Activated CD4-positive, alpha-beta memory T cell treated with anti-CD3 and anti-CD28 coated beads, Interleukin-2, amount 10 ng/mL, durations not matched to agents 7 days and 5 days (primary cell): ENCODE measurements at regions of chr12 and their contacts with region 1.

Region 1: DNA sequence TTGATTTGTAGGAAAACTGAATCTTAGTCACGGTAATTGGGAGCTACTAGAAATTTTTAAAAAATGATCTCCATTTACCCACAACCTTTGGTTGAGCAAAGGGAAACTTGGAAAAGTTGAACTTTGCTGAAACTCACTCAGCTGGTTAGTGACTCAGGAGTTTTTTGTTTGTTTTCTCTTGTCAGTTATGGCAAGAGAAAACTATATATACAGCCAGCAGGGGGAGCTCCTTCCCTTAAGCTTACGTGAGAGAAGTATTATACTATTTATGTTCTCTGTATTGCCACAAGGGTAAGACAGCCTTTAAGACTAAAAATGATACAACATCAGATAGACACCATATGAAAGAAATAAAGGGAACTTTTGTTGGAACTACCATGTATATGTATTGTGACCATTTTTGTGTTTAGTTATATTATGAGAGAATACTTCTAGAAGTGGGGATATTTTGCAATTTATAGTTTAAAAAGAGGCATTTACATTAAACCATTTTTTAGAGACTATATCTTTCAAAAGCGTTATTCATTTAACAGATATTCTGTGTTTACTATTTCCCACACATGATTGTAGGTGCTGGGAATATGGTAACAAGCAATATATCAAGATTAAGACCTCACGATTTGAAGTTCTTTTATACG is 28.1 kb upstream of the TBC1D30 start:
- DNase-seq: peak; percentile 55
- H3K4me3 Mint-ChIP-seq: no peak overlapping the region
- H3K27ac Mint-ChIP-seq: no peak overlapping the region
- H3K4me1 Mint-ChIP-seq: no peaks in the 10 kb centered on the region
- H3K27me3 Mint-ChIP-seq: peaks cover 33% of the 10 kb centered on the region

Region 2: DNA sequence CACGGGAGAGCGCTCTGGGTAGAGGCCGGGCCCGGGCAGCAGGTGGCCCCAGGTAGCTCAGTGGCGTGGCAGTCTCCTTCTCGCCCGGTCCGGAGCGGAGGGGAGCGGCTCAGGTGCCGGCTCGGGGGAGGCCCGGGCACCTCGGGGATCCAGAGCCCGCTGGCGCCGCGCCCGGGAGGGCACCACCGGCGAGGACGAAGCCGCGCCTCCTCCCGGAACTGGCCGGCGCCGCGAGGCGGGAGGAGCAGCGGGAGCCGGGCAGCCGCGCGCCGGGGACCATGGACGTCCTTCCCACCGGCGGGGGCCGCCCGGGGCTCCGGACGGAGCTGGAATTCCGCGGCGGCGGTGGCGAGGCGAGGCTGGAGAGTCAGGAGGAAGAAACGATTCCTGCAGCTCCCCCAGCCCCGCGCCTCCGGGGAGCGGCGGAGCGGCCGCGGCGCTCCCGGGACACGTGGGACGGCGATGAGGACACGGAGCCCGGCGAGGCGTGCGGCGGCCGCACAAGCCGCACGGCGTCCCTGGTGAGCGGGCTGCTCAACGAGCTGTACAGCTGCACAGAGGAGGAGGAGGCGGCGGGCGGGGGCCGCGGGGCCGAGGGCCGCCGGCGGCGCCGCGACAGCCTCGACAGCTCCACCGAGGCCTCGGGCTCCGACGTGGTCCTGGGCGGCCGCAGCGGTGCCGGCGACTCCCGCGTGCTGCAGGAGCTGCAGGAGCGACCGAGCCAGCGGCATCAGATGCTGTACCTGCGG is 15.6 kb before region 1 on chr12:
- CTCF ChIA-PET with region 1: interaction called, 16 read pairs
- POLR2A ChIA-PET with region 1: interaction called, 4 read pairs
- DNase-seq: no peak
- H3K4me3 Mint-ChIP-seq: peak overlapping the region; percentile 46
- H3K27ac Mint-ChIP-seq: no peak overlapping the region
- H3K4me1 Mint-ChIP-seq: peaks cover 17% of the 10 kb centered on the region
- H3K27me3 Mint-ChIP-seq: peaks cover 77% of the 10 kb centered on the region

Region 3: GRCh38 chr12:64785838-64786237 is 10.5 kb before region 1 on chr12:
- CTCF ChIA-PET with region 1: interaction called, 16 read pairs
- POLR2A ChIA-PET with region 1: interaction called, 4 read pairs
- DNase-seq: no peak
- H3K4me3 Mint-ChIP-seq: no peak overlapping the region
- H3K27ac Mint-ChIP-seq: no peak overlapping the region
- H3K4me1 Mint-ChIP-seq: peaks cover 12% of the 10 kb centered on the region
- H3K27me3 Mint-ChIP-seq: peaks cover 43% of the 10 kb centered on the region

Region 4: DNA sequence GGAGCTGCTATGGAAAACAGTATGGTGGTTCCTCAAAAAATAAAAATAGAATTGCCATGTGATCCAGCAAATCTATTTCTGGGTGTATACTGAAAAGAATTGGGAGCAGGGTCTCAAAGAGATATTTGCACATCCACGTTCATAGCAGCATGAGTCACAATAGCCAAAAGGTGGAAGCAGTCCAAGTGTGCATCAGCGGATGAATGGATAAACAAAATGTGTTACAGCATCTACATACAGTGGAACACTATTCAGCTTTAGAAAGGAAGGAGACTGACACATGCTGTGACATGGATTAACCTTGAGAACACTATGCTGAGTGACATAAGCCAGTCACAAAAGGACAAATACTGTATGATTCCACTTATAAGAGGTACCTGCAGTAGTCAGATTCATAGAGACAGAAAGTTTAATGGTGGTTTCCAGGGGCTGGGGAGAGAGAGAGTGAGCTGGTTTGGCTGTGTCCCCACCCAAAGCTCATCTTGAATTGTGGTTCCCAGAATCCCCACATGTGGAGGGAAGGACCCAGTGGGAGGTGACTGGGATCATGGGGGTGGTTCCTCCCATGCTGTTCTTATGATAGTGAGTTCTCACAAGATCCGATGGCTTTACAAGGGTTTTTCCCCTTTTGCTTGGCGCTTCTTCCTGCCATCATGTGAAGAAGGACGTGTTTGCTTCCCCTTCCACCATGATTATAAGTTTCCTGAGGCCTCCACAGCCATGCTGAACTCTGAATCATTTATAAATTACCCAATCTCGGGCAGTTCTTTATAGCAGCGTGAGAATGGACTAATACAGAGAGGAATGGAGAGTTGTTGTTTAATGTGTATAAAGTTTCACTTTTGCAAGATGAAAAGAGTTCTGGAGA is 10.5 kb after region 1 on chr12:
- CTCF ChIA-PET with region 1: interaction called, 14 read pairs
- POLR2A ChIA-PET with region 1: interaction called, 3 read pairs
- DNase-seq: no peak
- H3K4me3 Mint-ChIP-seq: no peak overlapping the region
- H3K27ac Mint-ChIP-seq: no peak overlapping the region
- H3K4me1 Mint-ChIP-seq: no peaks in the 10 kb centered on the region
- H3K27me3 Mint-ChIP-seq: peaks cover 48% of the 10 kb centered on the region

Region 5: GRCh38 chr12:64983771-64984278 is 187.5 kb after region 1 on chr12:
- CTCF ChIA-PET with region 1: no interaction called
- POLR2A ChIA-PET with region 1: no interaction called
- DNase-seq: no peak
- H3K4me3 Mint-ChIP-seq: no peak overlapping the region
- H3K27ac Mint-ChIP-seq: no peak overlapping the region
- H3K4me1 Mint-ChIP-seq: no peaks in the 10 kb centered on the region
- H3K27me3 Mint-ChIP-seq: no peaks in the 10 kb centered on the region

Region 6: DNA sequence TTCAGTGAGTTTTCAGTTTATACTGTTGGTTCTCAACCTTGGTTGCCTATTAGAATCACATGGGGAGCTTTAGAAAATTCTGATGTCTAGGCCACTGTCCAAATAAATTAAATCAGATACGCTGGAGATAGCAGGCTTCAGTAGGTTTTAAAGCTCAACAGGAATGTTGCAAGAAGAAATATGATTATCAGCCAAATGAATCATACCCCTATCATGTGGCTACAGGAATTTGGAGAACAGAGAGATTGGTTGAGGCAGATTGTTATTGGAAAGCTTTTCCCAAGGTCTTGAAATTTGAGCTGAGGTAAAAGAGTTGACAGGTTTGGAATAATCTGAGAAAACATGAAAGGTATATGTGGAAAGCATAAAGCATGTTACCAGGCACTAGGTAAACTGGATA is 199.5 kb after region 1 on chr12:
- CTCF ChIA-PET with region 1: no interaction called
- POLR2A ChIA-PET with region 1: no interaction called
- DNase-seq: no peak
- H3K4me3 Mint-ChIP-seq: no peak overlapping the region
- H3K27ac Mint-ChIP-seq: no peak overlapping the region
- H3K4me1 Mint-ChIP-seq: no peaks in the 10 kb centered on the region
- H3K27me3 Mint-ChIP-seq: no peaks in the 10 kb centered on the region

Region 7: GRCh38 chr12:65139389-65139788 is 343.1 kb after region 1 on chr12:
- CTCF ChIA-PET with region 1: no interaction called
- POLR2A ChIA-PET with region 1: no interaction called
- DNase-seq: no peak
- H3K4me3 Mint-ChIP-seq: no peak overlapping the region
- H3K27ac Mint-ChIP-seq: no peak overlapping the region
- H3K4me1 Mint-ChIP-seq: no peaks in the 10 kb centered on the region
- H3K27me3 Mint-ChIP-seq: peaks cover 31% of the 10 kb centered on the region